ENCODE measurements at regions of chr6 and their contacts with region 1.

Region 1: DNA sequence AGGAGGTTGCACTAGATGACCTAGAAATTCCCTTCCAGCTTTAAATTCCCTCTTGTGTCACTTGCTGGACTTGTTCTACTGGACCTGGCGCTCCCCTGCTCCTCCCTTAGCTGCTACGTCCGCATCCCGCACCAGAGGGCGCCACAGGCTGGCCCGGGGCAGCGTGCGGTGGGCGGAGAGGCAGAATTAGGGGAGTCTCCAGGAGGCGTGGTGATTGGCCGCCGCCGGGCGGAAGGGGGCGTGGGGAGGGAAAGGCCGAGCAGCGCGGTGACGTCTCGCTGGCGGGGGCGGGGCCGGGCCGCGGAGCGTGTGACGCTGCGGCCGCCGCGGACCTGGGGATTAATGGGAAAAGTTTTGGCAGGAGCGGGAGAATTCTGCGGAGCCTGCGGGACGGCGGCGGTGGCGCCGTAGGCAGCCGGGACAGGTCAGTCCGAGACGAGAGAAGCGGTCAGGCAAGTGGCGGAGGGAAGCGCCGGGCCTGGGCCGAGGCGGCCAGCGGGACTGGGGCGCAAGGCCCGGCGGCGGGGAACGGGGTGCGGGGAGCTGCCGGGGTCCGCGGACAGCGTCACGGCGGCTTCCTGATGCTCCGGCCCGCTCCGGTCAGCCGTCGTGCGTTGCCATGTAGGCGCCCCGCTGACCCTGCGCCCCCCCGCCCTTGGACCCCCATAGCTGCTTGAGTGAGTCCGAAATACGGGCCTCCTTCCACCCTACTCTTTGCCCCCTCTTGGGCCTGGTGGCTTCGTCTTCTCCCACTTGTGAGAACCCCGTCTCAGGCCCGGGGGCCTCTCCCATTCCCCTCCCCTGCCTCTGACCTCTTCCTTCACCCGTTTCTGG is at the start of gene PPARD:
- DNase-seq: peak; percentile 98
- ATAC-seq: peak; percentile 99
- H3K4me3 Mint-ChIP-seq: peak within 1 kb of the TSS; percentile 95
- H3K27ac Mint-ChIP-seq: peak within 1 kb of the TSS; percentile 86
- H3K4me1 Mint-ChIP-seq: peaks cover 31% of the 10 kb centered on the region
- H3K27me3 Mint-ChIP-seq: peaks cover 7% of the 10 kb centered on the region
- total RNA-seq, gene PPARD: 16.4 to 18.8 TPM

Region 2: GRCh38 chr6:35327349-35328027 is 15.0 kb before region 1 on chr6:
- CTCF ChIA-PET with region 1: interaction called, 10 read pairs
- DNase-seq: peak; percentile 87
- ATAC-seq: peak; percentile 98
- H3K4me3 Mint-ChIP-seq: no peak overlapping the region
- H3K27ac Mint-ChIP-seq: peak overlapping the region; percentile 73
- H3K4me1 Mint-ChIP-seq: peaks cover 20% of the 10 kb centered on the region
- H3K27me3 Mint-ChIP-seq: no peaks in the 10 kb centered on the region

Region 3: DNA sequence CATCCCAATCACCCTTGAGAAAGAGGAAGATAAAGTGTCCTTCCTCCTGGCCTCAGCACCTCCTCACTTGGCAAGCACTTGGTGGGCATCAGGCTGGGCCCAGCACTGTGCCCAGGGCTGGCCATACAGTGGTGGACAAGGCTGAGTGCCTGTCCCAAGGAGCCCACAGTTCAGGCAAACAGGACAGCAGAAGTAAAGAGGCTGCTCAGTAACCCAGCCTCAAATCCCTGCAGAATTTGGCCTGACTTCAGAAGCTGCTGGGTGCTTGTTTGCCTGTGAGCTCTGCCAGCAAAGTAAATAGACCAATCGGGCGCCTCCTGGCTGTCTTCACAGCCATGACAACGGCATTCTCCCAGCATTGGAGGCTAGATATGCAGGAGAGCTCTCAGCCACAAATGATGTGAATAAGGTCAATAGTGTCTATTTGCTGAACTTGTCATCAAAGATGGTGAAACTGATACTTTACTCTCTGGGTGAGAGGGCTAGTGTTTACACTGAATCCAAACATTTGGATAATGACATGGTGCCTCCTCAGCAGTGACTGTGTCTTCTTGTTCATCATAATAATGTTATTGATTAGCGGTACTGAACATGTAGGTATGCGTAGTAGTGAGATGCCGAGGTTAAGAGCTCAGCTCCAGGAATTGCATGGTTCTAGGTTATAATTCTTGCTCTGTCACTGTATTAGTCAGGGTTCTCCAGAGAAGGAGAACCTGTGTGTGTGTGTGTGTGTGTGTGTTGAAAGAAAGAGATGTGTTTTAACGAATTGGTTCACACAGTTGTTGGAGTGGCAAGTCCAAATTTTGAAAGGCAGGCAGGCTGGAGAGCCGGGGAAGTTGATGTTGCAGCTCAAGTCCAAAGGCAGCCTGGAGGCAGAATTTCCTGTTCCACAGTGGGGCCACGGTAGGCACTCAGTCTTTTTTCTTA is 72.9 kb after region 1 on chr6:
- CTCF ChIA-PET with region 1: interaction called, 19 read pairs
- DNase-seq: peak; percentile 52
- ATAC-seq: no peak
- H3K4me3 Mint-ChIP-seq: no peak overlapping the region
- H3K27ac Mint-ChIP-seq: peak overlapping the region; percentile 3
- H3K4me1 Mint-ChIP-seq: peaks cover 62% of the 10 kb centered on the region
- H3K27me3 Mint-ChIP-seq: no peaks in the 10 kb centered on the region

Region 4: GRCh38 chr6:35452186-35453090 is 110.0 kb after region 1 on chr6 and contains the start of gene FANCE:
- CTCF ChIA-PET with region 1: interaction called, 181 read pairs
- DNase-seq: peak; percentile 96
- ATAC-seq: peak; percentile 88
- H3K4me3 Mint-ChIP-seq: peak within 1 kb of the TSS; percentile 76
- H3K27ac Mint-ChIP-seq: peak within 1 kb of the TSS; percentile 59
- H3K4me1 Mint-ChIP-seq: peaks cover 34% of the 10 kb centered on the region
- H3K27me3 Mint-ChIP-seq: peaks cover 10% of the 10 kb centered on the region
- total RNA-seq, gene FANCE: 15.4 to 16.0 TPM

Region 5: DNA sequence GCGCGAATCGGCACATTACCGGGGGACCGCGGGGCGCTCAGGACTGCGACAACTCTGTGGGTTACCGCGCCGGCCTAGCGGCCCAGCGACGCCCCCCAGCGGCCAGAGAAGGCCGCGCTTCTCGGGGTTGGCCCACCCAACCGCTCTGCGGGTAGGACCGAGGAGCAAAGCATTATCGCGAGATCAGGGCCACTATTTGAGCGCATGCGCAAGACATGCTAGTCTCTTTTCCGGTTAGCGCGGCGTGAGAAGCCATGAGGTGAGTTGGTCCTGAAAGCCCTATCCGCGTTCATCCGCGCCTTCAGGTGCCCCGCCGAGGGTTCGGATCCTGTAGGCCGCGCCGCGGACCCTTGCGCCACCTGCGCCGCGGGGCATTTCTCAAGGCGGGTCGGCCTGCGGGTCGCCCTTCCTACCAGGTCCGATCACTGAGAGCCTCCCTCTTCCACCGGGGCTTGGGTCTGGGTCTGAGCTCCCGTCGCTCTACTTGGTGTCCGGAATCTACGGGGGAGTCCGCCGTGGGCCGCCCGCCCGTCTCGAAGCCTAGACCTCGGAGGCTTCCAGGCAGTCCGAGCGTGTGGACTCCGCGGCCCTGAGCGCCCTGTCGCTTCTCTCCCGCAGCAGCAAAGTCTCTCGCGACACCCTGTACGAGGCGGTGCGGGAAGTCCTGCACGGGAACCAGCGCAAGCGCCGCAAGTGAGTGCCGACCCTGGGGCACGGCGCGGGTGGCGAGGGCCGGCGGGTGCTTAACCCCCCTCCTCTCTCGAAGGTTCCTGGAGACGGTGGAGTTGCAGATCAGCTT is 125.9 kb after region 1 on chr6 and contains the start of gene RPL10A:
- CTCF ChIA-PET with region 1: interaction called, 50 read pairs
- DNase-seq: peak; percentile 98
- ATAC-seq: peak; percentile 87
- H3K4me3 Mint-ChIP-seq: peak within 1 kb of the TSS; percentile 99
- H3K27ac Mint-ChIP-seq: peak within 1 kb of the TSS; percentile 97
- H3K4me1 Mint-ChIP-seq: peaks cover 43% of the 10 kb centered on the region
- H3K27me3 Mint-ChIP-seq: no peaks in the 10 kb centered on the region
- total RNA-seq, gene RPL10A: 1,163 to 1,382 TPM

Region 6: DNA sequence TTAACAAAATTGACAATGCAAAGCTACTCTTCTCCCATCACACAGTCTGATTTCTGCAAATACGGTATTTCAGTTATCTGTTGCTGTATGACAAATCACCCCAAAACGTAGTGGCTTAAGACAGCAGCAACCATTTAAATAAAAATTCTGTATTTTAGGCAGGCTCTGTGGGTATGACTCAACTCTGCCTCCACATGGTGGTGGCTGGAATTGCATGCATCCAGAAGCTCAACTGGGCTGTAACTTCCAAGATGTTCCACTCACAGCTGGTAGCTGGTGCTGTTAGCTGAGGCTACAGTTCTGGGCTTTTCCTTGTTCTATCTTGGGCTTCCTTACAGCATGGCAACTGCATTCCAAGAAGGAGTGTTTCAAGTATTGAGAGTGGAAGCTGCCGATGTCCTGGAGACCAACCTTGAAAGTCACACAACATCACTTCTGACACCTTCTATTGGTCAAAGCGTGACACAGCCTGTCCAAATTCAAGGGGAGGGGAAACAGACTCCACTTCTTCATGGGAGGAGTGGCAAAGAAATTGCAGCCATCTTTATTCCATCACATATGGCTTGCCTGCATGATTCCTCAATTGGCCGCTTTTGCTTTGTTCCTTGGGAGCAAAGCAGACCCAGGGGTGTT is 209.9 kb after region 1 on chr6:
- CTCF ChIA-PET with region 1: interaction called, 15 read pairs
- DNase-seq: peak; percentile 78
- ATAC-seq: peak; percentile 53
- H3K4me3 Mint-ChIP-seq: no peak overlapping the region
- H3K27ac Mint-ChIP-seq: no peak overlapping the region
- H3K4me1 Mint-ChIP-seq: no peaks in the 10 kb centered on the region
- H3K27me3 Mint-ChIP-seq: peaks cover 14% of the 10 kb centered on the region

Measured in activated CD8-positive, alpha-beta memory T cell treated with anti-CD3 and anti-CD28 coated beads, Interleukin-2, amount 10 ng/mL, durations not matched to agents 7 days and 5 days (primary cell).